Calu3 (cell line): ENCODE measurements at regions of chr5 and their contacts with region 1.

Region 1: GRCh38 chr5:36507332-36507952 is 99.0 kb upstream of the SLC1A3 start:
- DNase-seq: peak; percentile 85
- H3K4me3 Mint-ChIP-seq: no peak overlapping the region
- H3K27ac Mint-ChIP-seq: no peak overlapping the region
- H3K4me1 Mint-ChIP-seq: peaks cover 7% of the 10 kb centered on the region
- H3K27me3 Mint-ChIP-seq: peaks cover 42% of the 10 kb centered on the region
- CTCF ChIP-seq: peak; percentile 82

Region 2: DNA sequence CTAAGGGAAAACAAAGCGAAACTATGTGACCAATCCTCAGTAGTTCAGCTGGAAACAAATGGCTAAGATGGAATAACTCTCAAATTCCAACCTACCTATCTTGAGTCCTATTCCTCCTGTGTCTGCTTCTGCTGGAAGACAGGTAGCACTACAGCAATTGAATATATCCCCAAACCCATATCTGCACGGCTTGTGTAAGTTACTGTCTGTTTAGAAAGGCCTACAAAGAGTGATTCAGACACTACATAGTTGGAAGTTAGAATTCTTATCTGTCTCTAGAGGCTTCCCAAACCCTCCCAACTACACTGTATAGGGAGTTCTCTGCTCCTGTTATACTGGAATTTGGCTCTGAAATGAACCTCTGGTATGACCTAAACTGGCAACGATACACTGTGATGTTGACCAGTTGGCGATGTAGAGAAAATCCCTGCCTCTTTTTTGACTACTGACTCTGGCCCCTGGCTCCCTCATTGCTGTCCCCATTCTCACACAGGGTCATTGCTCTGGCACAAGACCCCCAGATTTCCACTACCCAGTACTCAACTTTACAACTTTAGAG is 243.2 kb before region 1 on chr5:
- CTCF ChIA-PET with region 1: no interaction called
- intact Hi-C with region 1: loop called (anchors 10 kb)
- DNase-seq: no peak
- H3K4me3 Mint-ChIP-seq: no peak overlapping the region
- H3K27ac Mint-ChIP-seq: no peak overlapping the region
- H3K4me1 Mint-ChIP-seq: no peaks in the 10 kb centered on the region
- H3K27me3 Mint-ChIP-seq: no peaks in the 10 kb centered on the region
- CTCF ChIP-seq: no peak